Upper lobe of right lung (tissue), 1 donor: ENCODE measurements at regions of chr5 and their contacts with region 1.

Region 1: DNA sequence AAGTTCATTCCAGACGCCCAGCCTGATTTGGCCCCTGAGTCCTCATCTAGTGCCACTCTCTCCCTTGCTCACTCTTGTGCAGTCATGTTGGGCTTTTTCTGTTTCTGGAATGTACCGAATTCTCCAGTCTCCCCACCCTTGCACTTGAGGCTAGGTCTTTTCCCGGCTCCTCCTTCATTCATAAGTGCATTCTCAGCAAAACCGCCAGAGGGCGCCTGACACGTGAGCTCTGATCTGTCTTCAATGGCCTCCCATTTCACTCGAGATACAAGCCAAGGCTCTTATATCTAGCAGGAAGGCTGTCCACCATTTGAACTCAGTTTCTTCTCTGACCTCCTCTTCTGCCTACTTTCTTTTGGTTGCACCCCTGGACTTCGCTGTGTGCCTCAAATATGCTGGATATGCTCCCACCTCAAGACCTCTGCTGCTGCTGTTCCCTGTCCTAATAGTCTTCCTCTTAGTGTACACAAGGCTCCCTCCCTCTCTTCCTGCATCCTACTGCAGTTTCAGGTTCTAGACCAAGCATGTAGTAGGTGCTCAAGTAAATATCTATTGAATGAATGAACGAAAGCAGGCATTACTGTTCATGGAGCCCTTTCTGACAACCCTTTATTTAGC is 568.1 kb upstream of the WWC1 start:
- DNase-seq: peak; percentile 80
- ATAC-seq: peak; percentile 97
- H3K4me3 ChIP-seq: no peak overlapping the region
- H3K27ac ChIP-seq: no peak overlapping the region
- H3K4me1 ChIP-seq: no peaks in the 10 kb centered on the region
- H3K27me3 ChIP-seq: no peaks in the 10 kb centered on the region
- CTCF ChIP-seq: peak; percentile 87

Region 2: DNA sequence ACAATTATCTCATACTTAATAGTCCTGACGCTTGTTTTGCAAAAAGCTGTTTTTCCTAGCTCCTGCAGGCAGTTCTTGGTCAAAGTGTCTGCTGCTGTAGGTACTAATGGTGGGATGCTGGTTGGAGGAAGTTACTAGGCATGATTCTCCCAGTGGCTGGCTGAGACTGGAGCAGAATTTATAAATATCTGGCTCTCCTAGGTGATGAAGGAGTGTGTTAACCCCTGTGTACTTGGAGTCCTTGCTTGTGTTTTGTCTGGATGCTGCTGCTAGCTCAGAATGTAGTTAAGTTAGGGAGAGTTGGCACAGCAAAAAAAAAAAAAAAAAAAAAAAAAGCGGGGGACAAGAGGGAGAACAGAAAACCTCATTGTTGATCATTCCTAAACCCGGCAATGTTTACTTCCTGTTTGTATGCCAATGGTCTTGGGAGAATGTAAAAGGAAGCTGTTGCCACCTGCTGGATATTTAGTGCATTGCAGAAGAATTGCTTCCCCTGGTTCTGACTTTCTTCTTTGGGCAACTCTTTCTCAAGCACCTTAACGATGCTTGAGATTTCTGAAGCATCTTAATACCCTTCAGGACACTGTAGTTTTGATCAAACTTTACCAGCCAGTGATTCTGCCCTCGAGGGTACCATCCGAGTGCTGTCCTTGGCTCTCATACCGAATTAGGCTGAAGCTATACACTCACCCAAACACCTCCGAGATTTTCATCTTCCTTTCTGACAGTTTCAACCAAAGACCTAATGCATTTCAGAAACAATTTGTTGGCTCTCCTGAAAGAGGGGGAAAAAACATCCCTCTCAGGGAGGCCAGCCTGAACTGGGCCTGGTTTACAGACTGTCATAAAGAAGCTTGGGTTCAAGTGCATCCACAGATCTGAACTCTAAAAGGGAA is 496.4 kb after region 1 on chr5:
- intact Hi-C with region 1: loop called (anchors 10 kb)
- DNase-seq: no peak
- ATAC-seq: peak; percentile 89
- H3K4me3 ChIP-seq: no peak overlapping the region
- H3K27ac ChIP-seq: no peak overlapping the region
- H3K4me1 ChIP-seq: peaks cover 3% of the 10 kb centered on the region
- H3K27me3 ChIP-seq: no peaks in the 10 kb centered on the region
- CTCF ChIP-seq: peak; percentile 85